ENCODE measurements at regions of chr9 and their contacts with region 1.

Region 1: GRCh38 chr9:131277910-131278701 is 1.8 kb upstream of the FAM78A start:
- DNase-seq: peak; percentile 100
- ATAC-seq: peak; percentile 65
- H3K4me3 ChIP-seq: peak overlapping the region; percentile 65
- H3K27ac ChIP-seq: peak overlapping the region; percentile 75
- H3K4me1 ChIP-seq: peaks cover 28 to 75% of the 10 kb centered on the region in 2 experiments
- H3K27me3 ChIP-seq: peaks cover 3 to 13% of the 10 kb centered on the region in 2 experiments; a peak in 3 of 5 replicates
- CTCF ChIP-seq: no peak; a peak in 1 of 6 replicates
- EP300 ChIP-seq: peak; percentile 40; the same call in 1 of the 2 replicates
- POLR2A ChIP-seq: no peak
- RAD21 ChIP-seq: no peak

Region 2: DNA sequence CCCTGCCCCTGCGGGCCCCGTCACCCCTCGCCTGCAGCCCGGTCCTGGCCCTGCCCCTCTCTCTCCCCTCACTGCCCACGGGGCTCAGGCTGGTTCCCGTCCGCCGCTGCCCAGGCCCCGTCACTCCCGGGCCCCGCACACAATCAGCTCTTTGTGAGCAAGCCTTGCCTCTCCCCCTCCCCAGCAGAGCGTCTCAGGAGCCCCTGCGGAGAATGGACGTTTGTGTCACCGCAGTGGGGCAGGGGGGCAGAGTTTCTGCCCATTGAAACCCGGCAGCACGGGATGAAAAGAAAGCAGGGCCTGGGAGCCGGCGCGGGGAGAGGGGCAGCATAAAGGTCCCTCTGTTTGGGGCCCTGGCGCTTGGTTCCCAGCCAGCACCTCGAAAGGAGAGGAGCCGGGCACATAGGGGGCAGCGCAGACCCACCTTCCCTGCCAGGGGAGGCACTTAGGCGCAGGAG is 166.2 kb before region 1 on chr9:
- CTCF ChIA-PET with region 1: no interaction called
- POLR2A ChIA-PET with region 1: interaction called, 4 read pairs
- in situ Hi-C with region 1: no loop called
- intact Hi-C with region 1: loop called (anchors 5 kb)
- DNase-seq: peak in 1 of 4 experiments; percentile 63
- ATAC-seq: no peak; the same call in 2 of the 3 replicates
- H3K4me3 ChIP-seq: no peak overlapping the region
- H3K27ac ChIP-seq: no peak overlapping the region
- H3K4me1 ChIP-seq: peaks cover 0 to 18% of the 10 kb centered on the region in 2 experiments; a peak in 2 of 5 replicates
- H3K27me3 ChIP-seq: peaks cover 89 to 98% of the 10 kb centered on the region in 2 experiments
- CTCF ChIP-seq: no peak
- EP300 ChIP-seq: no peak
- POLR2A ChIP-seq: no peak
- RAD21 ChIP-seq: no peak

Region 3: DNA sequence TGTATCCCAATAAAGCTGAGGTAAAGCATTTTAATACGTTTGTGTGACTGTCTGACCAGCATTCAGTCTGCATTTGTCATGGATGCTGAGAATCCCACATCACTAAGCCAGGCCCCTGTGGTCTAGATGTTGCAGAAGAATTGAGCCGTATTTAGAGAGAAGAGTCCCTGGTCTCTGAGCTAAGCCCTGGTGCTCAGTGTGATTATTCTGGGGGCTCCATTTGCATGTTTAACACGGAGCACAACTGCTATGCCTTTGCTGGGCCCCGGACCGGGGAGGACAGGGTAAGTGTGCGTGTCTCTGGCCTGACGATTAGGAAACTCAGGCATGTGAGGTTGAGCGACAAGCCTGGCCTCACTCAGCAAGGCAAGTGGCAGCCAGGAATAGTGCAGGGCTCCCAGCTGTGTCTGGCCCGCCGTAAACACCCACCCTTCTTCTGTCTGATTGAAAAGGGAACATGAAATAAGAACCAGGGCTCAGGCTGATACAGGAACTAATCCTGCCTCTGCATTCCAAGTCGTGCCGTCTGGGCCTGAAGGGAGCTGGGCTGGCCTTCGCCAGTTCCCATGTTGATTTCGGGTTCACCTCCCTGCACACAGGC is 24.1 kb before region 1 on chr9:
- CTCF ChIA-PET with region 1: no interaction called
- POLR2A ChIA-PET with region 1: interaction called, 338 read pairs
- in situ Hi-C with region 1: no loop called
- intact Hi-C with region 1: no loop called
- DNase-seq: no peak
- ATAC-seq: peak; percentile 1; the same call in 1 of the 3 replicates
- H3K4me3 ChIP-seq: no peak overlapping the region
- H3K27ac ChIP-seq: no peak overlapping the region
- H3K4me1 ChIP-seq: peaks cover 12 to 29% of the 10 kb centered on the region in 2 experiments
- H3K27me3 ChIP-seq: peaks cover 0 to 7% of the 10 kb centered on the region in 2 experiments; a peak in 1 of 5 replicates
- CTCF ChIP-seq: no peak
- EP300 ChIP-seq: no peak
- POLR2A ChIP-seq: no peak
- RAD21 ChIP-seq: no peak

Region 4: GRCh38 chr9:131262327-131263032 is 15.6 kb before region 1 on chr9:
- CTCF ChIA-PET with region 1: no interaction called
- POLR2A ChIA-PET with region 1: interaction called, 338 read pairs
- in situ Hi-C with region 1: no loop called
- intact Hi-C with region 1: no loop called
- DNase-seq: peak in 1 of 4 experiments; percentile 9
- ATAC-seq: no peak
- H3K4me3 ChIP-seq: no peak overlapping the region
- H3K27ac ChIP-seq: no peak overlapping the region
- H3K4me1 ChIP-seq: peaks cover 0 to 49% of the 10 kb centered on the region in 2 experiments; a peak in 3 of 5 replicates
- H3K27me3 ChIP-seq: peaks cover 0 to 9% of the 10 kb centered on the region in 2 experiments; a peak in 2 of 5 replicates
- CTCF ChIP-seq: no peak
- EP300 ChIP-seq: no peak
- POLR2A ChIP-seq: no peak
- RAD21 ChIP-seq: no peak

Region 5: GRCh38 chr9:131334629-131335367 is 56.7 kb after region 1 on chr9:
- CTCF ChIA-PET with region 1: no interaction called
- POLR2A ChIA-PET with region 1: interaction called, 6 read pairs
- in situ Hi-C with region 1: no loop called
- intact Hi-C with region 1: loop called (anchors 1 kb)
- DNase-seq: peak in 3 of 4 experiments; percentile 24 to 26 (median 25)
- ATAC-seq: 0 out of 3 replicates have a peak, but pooled peaks have one; percentile 3
- H3K4me3 ChIP-seq: no peak overlapping the region
- H3K27ac ChIP-seq: no peak overlapping the region
- H3K4me1 ChIP-seq: peaks cover 21 to 45% of the 10 kb centered on the region in 2 experiments; a peak in 4 of 5 replicates
- H3K27me3 ChIP-seq: no peaks in the 10 kb centered on the region
- CTCF ChIP-seq: no peak
- EP300 ChIP-seq: no peak
- POLR2A ChIP-seq: no peak
- RAD21 ChIP-seq: no peak

Region 6: GRCh38 chr9:131393622-131394463 is 115.7 kb after region 1 on chr9 and contains the start of gene PRRC2B:
- CTCF ChIA-PET with region 1: no interaction called
- POLR2A ChIA-PET with region 1: no interaction called
- in situ Hi-C with region 1: no loop called
- intact Hi-C with region 1: no loop called
- DNase-seq: peak; percentile 90 to 96 (median 96)
- ATAC-seq: peak; percentile 78
- H3K4me3 ChIP-seq: peak within 1 kb of the TSS; percentile 96
- H3K27ac ChIP-seq: peak within 1 kb of the TSS; percentile 89
- H3K4me1 ChIP-seq: peaks cover 26 to 33% of the 10 kb centered on the region in 2 experiments
- H3K27me3 ChIP-seq: no peaks in the 10 kb centered on the region
- CTCF ChIP-seq: peak in 2 of 3 experiments; percentile 47 to 71; a peak in 4 of 6 replicates
- EP300 ChIP-seq: no peak
- POLR2A ChIP-seq: no peak
- RAD21 ChIP-seq: no peak
- polyA plus RNA-seq, gene PRRC2B: 0.34 to 0.77 TPM

Measured in K562 (cell line).